Transverse colon (tissue), 4 donors: ENCODE measurements at regions of chr14 and their contacts with region 1.

Region 1: DNA sequence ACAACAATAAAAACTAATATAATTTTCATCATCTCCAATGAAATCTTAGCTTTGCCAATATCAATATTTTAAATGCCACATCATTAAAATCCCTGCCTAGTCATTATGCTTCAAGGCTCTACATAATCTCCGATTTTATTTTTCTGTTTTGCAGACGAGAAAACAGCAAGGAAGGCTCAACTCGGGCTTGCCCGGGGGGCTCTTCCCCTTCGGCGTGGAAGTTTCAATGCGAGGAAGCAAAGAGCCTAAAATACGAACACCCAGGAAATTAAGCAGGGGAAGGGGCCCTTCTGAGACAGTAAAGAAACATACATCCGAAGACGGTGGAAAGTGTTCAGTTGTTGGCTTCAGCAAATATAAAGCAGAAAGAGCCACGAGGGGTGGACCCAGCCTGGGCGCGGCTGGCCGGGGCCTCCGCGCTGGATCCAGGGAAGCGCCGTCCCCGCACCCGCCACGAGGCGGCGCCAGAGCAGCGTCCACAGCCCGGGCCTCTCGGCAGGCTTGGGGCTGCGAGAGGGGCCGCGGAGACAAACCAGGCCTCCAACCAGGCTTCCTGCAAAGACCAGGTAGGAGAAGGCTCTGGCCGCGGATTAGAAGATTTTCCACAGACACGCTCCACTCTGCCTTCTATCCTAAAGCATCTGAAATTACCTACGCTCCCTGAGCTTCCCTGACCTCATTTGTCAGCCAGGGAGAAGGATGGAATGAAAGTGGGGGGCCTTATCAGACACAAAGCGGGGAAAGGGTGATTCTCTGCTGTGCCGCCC is 77.2 kb downstream of the SERPINA3 start:
- DNase-seq: peak; percentile 50
- H3K4me3 ChIP-seq: peak overlapping the region in 1 of 4 donors; percentile 24
- H3K27ac ChIP-seq: no peak overlapping the region
- H3K4me1 ChIP-seq: peaks cover 0 to 8% (median 3%) of the 10 kb centered on the region in 4 donors
- H3K27me3 ChIP-seq: peaks cover 9% of the 10 kb centered on the region
- CTCF ChIP-seq: peak; percentile 88 to 97 (median 95)
- EP300 ChIP-seq: no peak
- POLR2A ChIP-seq: no peak

Region 2: DNA sequence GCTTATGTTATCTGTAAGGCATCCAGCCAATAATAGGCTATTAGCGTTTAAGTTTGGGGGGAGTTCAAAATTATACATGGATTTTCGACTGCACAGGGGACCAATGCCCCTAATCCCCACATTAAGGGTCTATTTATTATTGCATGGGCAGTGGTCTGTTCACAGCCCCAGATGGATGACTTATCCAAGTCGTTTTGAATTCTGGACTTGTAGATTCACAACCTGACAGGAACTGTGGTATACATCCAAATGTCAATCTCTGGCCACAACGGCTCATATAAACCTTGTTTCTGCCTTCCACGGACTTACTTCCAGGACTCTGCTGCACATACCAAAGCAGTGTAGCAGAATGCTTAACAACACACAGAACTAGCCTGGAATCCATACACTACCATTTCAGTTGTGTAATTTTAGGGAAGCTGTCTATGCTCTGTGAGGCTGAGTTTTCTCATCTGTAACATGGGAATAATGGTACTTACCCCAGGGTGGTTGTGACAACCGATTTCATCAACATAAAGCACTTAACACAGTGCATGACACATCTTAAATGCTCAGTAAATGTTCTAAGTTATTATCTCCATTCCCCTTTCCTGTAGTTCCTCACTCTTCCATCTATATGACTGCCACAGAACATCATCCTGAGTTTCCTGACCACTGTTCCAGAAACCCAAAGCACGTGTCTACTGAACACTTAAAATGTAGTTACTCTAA is 612.1 kb before region 1 on chr14:
- in situ Hi-C with region 1: no loop called
- intact Hi-C with region 1: no loop called
- DNase-seq: no peak
- H3K4me3 ChIP-seq: peak overlapping the region in 1 of 4 donors; percentile 100
- H3K27ac ChIP-seq: no peak overlapping the region
- H3K4me1 ChIP-seq: peaks cover 11 to 55% (median 34%) of the 10 kb centered on the region in 4 donors
- H3K27me3 ChIP-seq: no peaks in the 10 kb centered on the region
- CTCF ChIP-seq: no peak
- EP300 ChIP-seq: no peak
- POLR2A ChIP-seq: no peak

Region 3: GRCh38 chr14:95098984-95099599 is 409.7 kb after region 1 on chr14:
- in situ Hi-C with region 1: loop called in 2 of 4 experiments (anchors 10 to 25 kb)
- intact Hi-C with region 1: loop called (anchors 2 kb)
- DNase-seq: peak; percentile 63
- H3K4me3 ChIP-seq: no peak overlapping the region
- H3K27ac ChIP-seq: no peak overlapping the region
- H3K4me1 ChIP-seq: peaks cover 0 to 25% (median 0%) of the 10 kb centered on the region in 4 donors
- H3K27me3 ChIP-seq: no peaks in the 10 kb centered on the region
- CTCF ChIP-seq: peak; percentile 64 to 83 (median 70)
- EP300 ChIP-seq: no peak
- POLR2A ChIP-seq: no peak

Region 4: GRCh38 chr14:95431199-95432143 is 742.1 kb after region 1 on chr14:
- in situ Hi-C with region 1: loop called (anchors 10 to 25 kb)
- intact Hi-C with region 1: loop called (anchors 2 kb)
- DNase-seq: no peak
- H3K4me3 ChIP-seq: no peak overlapping the region
- H3K27ac ChIP-seq: no peak overlapping the region
- H3K4me1 ChIP-seq: peaks cover 0 to 3% (median 0%) of the 10 kb centered on the region in 4 donors
- H3K27me3 ChIP-seq: no peaks in the 10 kb centered on the region
- CTCF ChIP-seq: peak; percentile 35 to 53 (median 47)
- EP300 ChIP-seq: no peak
- POLR2A ChIP-seq: no peak